ENCODE measurements at regions of chr19 and their contacts with region 1.

Region 1: GRCh38 chr19:9796113-9796773 is 22.6 kb downstream of the FBXL12 start:
- DNase-seq: peak; percentile 75 to 95
- ATAC-seq: peak; percentile 41 to 70 (median 48)
- H3K4me3 ChIP-seq: no peak overlapping the region
- H3K4me3 Mint-ChIP-seq: no peak overlapping the region
- H3K27ac ChIP-seq: peak overlapping the region; percentile 77
- H3K27ac Mint-ChIP-seq: peak overlapping the region; percentile 39 to 70
- H3K4me1 ChIP-seq: peaks cover 10% of the 10 kb centered on the region
- H3K4me1 Mint-ChIP-seq: peaks cover 19 to 26% of the 10 kb centered on the region in 2 donors
- H3K27me3 ChIP-seq: no peaks in the 10 kb centered on the region
- H3K27me3 Mint-ChIP-seq: no peaks in the 10 kb centered on the region
- CTCF ChIP-seq: peak; percentile 90

Region 2: DNA sequence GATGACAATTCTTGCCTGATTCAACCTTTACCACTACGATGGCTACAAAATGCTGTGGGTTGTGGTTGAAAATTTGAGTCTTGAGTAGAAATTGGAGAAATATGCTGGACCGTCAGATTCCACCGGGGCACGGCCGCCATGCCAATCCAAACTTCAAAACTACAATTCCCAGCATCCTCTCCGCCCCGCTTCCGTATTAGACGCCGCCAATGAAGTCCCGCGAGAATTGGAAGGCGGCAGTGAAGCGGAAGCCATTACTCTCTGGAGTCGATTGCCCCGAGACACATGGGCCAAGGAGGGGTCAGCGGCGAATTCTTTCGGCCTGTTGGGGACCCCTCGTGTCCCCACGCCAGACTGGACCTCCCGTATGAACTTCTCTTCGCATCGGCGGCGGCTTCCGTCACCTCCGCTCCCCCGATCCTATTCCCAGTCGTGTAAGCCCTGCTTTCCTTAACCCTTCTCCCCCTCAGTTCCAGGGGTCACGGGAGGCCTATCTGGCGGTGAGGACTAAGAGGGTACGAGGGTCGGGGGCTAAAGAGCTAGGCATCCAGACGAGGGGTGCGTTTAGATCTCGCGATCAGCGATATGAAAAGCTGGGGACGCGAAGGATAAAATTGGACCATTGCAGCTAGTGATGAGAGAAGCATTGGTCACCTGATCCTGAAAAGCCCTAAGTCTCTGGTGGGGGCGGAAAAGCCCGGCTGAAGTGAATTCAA is 655.9 kb before region 1 on chr19 and contains the start of gene ZNF317:
- intact Hi-C with region 1: loop called (anchors 1 kb)
- DNase-seq: peak; percentile 85 to 96
- ATAC-seq: peak; percentile 95 to 96 (median 96)
- H3K4me3 ChIP-seq: peak within 1 kb of the TSS; percentile 97
- H3K4me3 Mint-ChIP-seq: peak within 1 kb of the TSS; percentile 98
- H3K27ac ChIP-seq: peak within 1 kb of the TSS; percentile 91
- H3K27ac Mint-ChIP-seq: peak within 1 kb of the TSS; percentile 95 to 99
- H3K4me1 ChIP-seq: peaks cover 13% of the 10 kb centered on the region
- H3K4me1 Mint-ChIP-seq: peaks cover 35 to 46% of the 10 kb centered on the region in 2 donors
- H3K27me3 ChIP-seq: no peaks in the 10 kb centered on the region
- H3K27me3 Mint-ChIP-seq: peaks cover 0 to 2% of the 10 kb centered on the region in 2 donors
- CTCF ChIP-seq: no peak
- total RNA-seq, gene ZNF317: 78.0 to 91.2 (median 82.8) TPM

Region 3: GRCh38 chr19:9205501-9206113 is 590.6 kb before region 1 on chr19:
- intact Hi-C with region 1: loop called (anchors 1 kb)
- DNase-seq: peak; percentile 55 to 75
- ATAC-seq: peak; percentile 64 to 81 (median 80)
- H3K4me3 ChIP-seq: no peak overlapping the region
- H3K4me3 Mint-ChIP-seq: no peak overlapping the region
- H3K27ac ChIP-seq: no peak overlapping the region
- H3K27ac Mint-ChIP-seq: peak overlapping the region in 1 of 2 donors; percentile 58
- H3K4me1 ChIP-seq: peaks cover 5% of the 10 kb centered on the region
- H3K4me1 Mint-ChIP-seq: peaks cover 6 to 7% of the 10 kb centered on the region in 2 donors
- H3K27me3 ChIP-seq: no peaks in the 10 kb centered on the region
- H3K27me3 Mint-ChIP-seq: peaks cover 15 to 19% of the 10 kb centered on the region in 2 donors
- CTCF ChIP-seq: peak; percentile 89

Region 4: DNA sequence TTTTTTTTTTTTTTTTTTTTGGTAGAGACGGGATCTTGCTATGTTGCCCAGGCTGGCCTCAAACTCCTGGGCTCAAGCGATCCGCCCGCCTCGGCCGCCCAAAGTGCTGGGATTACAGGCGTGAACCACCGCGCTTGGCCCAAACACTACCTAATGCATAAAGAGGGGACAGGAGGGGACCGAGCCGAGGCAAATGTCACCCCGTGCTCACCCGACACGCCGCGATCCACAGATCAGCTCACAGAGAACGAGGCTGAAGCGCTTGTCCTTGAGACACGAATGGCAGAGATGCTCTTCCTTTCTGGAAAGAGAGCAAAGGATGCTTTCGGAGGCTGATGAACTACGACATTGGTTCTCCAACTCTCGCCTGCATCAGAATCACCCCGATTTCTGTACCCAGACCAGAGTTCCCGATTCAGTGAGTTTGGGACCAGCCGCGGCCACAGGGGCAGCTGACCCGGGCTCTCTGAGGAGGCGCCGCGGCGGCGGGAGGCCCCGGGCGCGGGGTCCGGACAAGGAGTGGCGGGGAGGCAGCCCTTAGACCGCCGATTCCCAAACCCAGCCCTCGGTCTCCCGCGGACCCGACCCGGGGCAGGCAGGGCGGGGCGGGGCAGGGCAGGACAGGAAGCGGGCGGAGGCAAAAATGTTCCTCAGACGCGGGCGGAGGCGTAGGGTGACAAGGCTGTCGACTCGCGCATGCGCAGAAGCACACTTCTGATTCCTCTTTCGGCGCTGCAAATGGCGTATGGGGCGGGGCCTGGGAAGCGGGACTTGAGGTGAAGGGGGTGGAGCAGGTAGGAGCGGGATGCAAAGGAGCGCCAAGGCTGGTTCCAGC is 486.9 kb before region 1 on chr19 and contains the start of gene ZNF699:
- intact Hi-C with region 1: loop called (anchors 1 kb)
- DNase-seq: peak; percentile 96 to 100
- ATAC-seq: peak; percentile 89 to 95 (median 90)
- H3K4me3 ChIP-seq: peak within 1 kb of the TSS; percentile 94
- H3K4me3 Mint-ChIP-seq: peak within 1 kb of the TSS; percentile 89
- H3K27ac ChIP-seq: peak within 1 kb of the TSS; percentile 90
- H3K27ac Mint-ChIP-seq: peak within 1 kb of the TSS; percentile 96 to 99
- H3K4me1 ChIP-seq: peaks cover 17% of the 10 kb centered on the region
- H3K4me1 Mint-ChIP-seq: peaks cover 30 to 46% of the 10 kb centered on the region in 2 donors
- H3K27me3 ChIP-seq: no peaks in the 10 kb centered on the region
- H3K27me3 Mint-ChIP-seq: no peaks in the 10 kb centered on the region
- CTCF ChIP-seq: no peak
- total RNA-seq, gene ZNF699: 13.4 to 15.3 (median 15.2) TPM

Region 5: GRCh38 chr19:9435279-9436268 is 360.7 kb before region 1 on chr19 and contains the start of gene ZNF266:
- intact Hi-C with region 1: loop called (anchors 10 kb)
- DNase-seq: peak; percentile 91 to 98
- ATAC-seq: peak; percentile 81 to 91 (median 84)
- H3K4me3 ChIP-seq: peak within 1 kb of the TSS; percentile 73
- H3K4me3 Mint-ChIP-seq: peak within 1 kb of the TSS; percentile 98
- H3K27ac ChIP-seq: peak within 1 kb of the TSS; percentile 91
- H3K27ac Mint-ChIP-seq: peak within 1 kb of the TSS; percentile 97
- H3K4me1 ChIP-seq: peaks cover 14% of the 10 kb centered on the region
- H3K4me1 Mint-ChIP-seq: peaks cover 53 to 59% of the 10 kb centered on the region in 2 donors
- H3K27me3 ChIP-seq: no peaks in the 10 kb centered on the region
- H3K27me3 Mint-ChIP-seq: no peaks in the 10 kb centered on the region
- CTCF ChIP-seq: peak; percentile 75
- total RNA-seq, gene ZNF266: 89.9 to 108 (median 104) TPM

Region 6: DNA sequence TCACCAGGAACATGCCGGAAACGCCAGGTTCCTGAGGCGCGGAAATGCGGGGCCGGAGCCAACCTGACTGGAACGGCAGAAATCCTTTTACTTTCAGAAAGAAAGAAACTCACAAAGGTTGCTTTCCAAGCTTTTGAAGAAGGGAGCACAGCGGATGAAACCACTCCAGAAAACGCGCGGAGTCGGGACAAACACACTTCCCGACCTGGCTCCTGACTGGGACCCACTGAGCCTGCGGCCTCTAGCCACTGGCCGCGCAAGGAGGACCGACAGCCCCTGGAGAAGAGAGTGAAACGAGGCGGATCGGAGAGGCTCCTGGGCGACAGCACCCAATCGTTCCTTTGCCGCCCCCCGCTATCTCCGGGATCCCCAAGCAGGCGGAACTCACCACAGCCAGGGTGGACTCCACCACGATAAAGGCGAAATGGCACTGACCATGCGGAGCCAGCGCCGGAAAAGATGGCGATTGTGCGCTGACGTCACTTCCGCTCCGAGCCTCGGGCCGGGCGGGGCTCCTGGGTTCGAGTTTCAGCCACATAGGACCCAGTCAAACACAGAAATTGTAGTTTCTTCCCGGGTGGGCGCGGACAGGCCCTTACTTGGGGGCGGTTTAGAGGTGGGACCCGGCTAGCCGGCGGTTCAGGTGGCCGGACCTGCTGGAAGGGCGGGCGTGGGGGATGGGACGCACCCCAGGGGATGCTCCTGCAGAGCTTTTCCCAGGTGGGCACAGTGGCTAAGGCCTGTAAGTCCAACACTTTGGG is 212.0 kb before region 1 on chr19 and contains the start of gene ZNF121:
- intact Hi-C with region 1: loop called (anchors 1 kb)
- DNase-seq: peak; percentile 83 to 89
- ATAC-seq: peak; percentile 88 to 89 (median 89)
- H3K4me3 ChIP-seq: peak within 1 kb of the TSS; percentile 95
- H3K4me3 Mint-ChIP-seq: peak within 1 kb of the TSS; percentile 96
- H3K27ac ChIP-seq: peak within 1 kb of the TSS; percentile 94
- H3K27ac Mint-ChIP-seq: peak within 1 kb of the TSS; percentile 97
- H3K4me1 ChIP-seq: peaks cover 27% of the 10 kb centered on the region
- H3K4me1 Mint-ChIP-seq: peaks cover 41 to 44% of the 10 kb centered on the region in 2 donors
- H3K27me3 ChIP-seq: no peaks in the 10 kb centered on the region
- H3K27me3 Mint-ChIP-seq: peaks cover 9 to 19% of the 10 kb centered on the region in 2 donors
- CTCF ChIP-seq: no peak
- total RNA-seq, gene ZNF121: 32.9 to 35.7 (median 33.1) TPM

Region 7: DNA sequence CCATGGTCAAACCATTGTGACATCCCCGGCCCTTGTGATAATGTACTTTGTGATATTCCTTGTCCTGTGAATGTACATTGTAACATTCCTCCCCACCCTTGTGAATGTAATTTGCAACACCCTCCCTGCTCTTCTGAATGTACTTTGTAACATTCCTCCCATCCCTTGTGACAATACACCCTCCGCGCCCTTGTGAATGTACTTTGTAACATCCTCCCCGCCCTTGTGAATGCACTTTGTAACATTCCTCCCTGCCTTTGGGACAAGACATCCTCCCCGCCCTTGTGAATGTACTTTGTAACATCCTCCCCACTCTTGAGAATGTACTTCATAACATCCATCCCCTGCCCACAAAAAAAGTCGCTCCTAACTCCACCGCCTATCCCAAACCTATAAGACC is 44.8 kb before region 1 on chr19:
- intact Hi-C with region 1: no loop called
- DNase-seq: no peak
- ATAC-seq: no peak
- H3K4me3 ChIP-seq: no peak overlapping the region
- H3K4me3 Mint-ChIP-seq: no peak overlapping the region
- H3K27ac ChIP-seq: no peak overlapping the region
- H3K27ac Mint-ChIP-seq: no peak overlapping the region
- H3K4me1 ChIP-seq: no peaks in the 10 kb centered on the region
- H3K4me1 Mint-ChIP-seq: no peaks in the 10 kb centered on the region
- H3K27me3 ChIP-seq: no peaks in the 10 kb centered on the region
- H3K27me3 Mint-ChIP-seq: no peaks in the 10 kb centered on the region
- CTCF ChIP-seq: no peak

Region 8: GRCh38 chr19:9818734-9819589 is 22.7 kb after region 1 on chr19 and contains the start of gene FBXL12:
- intact Hi-C with region 1: loop called (anchors 1 kb)
- DNase-seq: peak; percentile 100
- ATAC-seq: peak; percentile 86 to 96 (median 87)
- H3K4me3 ChIP-seq: peak within 1 kb of the TSS; percentile 87
- H3K4me3 Mint-ChIP-seq: peak within 1 kb of the TSS; percentile 90
- H3K27ac ChIP-seq: peak within 1 kb of the TSS; percentile 95
- H3K27ac Mint-ChIP-seq: peak within 1 kb of the TSS; percentile 87 to 89
- H3K4me1 ChIP-seq: peaks cover 14% of the 10 kb centered on the region
- H3K4me1 Mint-ChIP-seq: peaks cover 19 to 33% of the 10 kb centered on the region in 2 donors
- H3K27me3 ChIP-seq: no peaks in the 10 kb centered on the region
- H3K27me3 Mint-ChIP-seq: no peaks in the 10 kb centered on the region
- CTCF ChIP-seq: no peak
- total RNA-seq, gene FBXL12: 36.9 to 46.8 (median 43.6) TPM

Region 9: GRCh38 chr19:9885077-9885552 is 88.9 kb after region 1 on chr19:
- intact Hi-C with region 1: no loop called
- DNase-seq: no peak
- ATAC-seq: no peak
- H3K4me3 ChIP-seq: no peak overlapping the region
- H3K4me3 Mint-ChIP-seq: no peak overlapping the region
- H3K27ac ChIP-seq: no peak overlapping the region
- H3K27ac Mint-ChIP-seq: no peak overlapping the region
- H3K4me1 ChIP-seq: no peaks in the 10 kb centered on the region
- H3K4me1 Mint-ChIP-seq: no peaks in the 10 kb centered on the region
- H3K27me3 ChIP-seq: no peaks in the 10 kb centered on the region
- H3K27me3 Mint-ChIP-seq: peaks cover 12 to 16% of the 10 kb centered on the region in 2 donors
- CTCF ChIP-seq: no peak

Region 10: GRCh38 chr19:9945319-9945966 is 149.2 kb after region 1 on chr19:
- intact Hi-C with region 1: no loop called
- DNase-seq: no peak
- ATAC-seq: no peak
- H3K4me3 ChIP-seq: no peak overlapping the region
- H3K4me3 Mint-ChIP-seq: no peak overlapping the region
- H3K27ac ChIP-seq: no peak overlapping the region
- H3K27ac Mint-ChIP-seq: no peak overlapping the region
- H3K4me1 ChIP-seq: no peaks in the 10 kb centered on the region
- H3K4me1 Mint-ChIP-seq: no peaks in the 10 kb centered on the region
- H3K27me3 ChIP-seq: peaks cover 6% of the 10 kb centered on the region
- H3K27me3 Mint-ChIP-seq: peaks cover 6 to 15% of the 10 kb centered on the region in 2 donors
- CTCF ChIP-seq: no peak

Region 11: DNA sequence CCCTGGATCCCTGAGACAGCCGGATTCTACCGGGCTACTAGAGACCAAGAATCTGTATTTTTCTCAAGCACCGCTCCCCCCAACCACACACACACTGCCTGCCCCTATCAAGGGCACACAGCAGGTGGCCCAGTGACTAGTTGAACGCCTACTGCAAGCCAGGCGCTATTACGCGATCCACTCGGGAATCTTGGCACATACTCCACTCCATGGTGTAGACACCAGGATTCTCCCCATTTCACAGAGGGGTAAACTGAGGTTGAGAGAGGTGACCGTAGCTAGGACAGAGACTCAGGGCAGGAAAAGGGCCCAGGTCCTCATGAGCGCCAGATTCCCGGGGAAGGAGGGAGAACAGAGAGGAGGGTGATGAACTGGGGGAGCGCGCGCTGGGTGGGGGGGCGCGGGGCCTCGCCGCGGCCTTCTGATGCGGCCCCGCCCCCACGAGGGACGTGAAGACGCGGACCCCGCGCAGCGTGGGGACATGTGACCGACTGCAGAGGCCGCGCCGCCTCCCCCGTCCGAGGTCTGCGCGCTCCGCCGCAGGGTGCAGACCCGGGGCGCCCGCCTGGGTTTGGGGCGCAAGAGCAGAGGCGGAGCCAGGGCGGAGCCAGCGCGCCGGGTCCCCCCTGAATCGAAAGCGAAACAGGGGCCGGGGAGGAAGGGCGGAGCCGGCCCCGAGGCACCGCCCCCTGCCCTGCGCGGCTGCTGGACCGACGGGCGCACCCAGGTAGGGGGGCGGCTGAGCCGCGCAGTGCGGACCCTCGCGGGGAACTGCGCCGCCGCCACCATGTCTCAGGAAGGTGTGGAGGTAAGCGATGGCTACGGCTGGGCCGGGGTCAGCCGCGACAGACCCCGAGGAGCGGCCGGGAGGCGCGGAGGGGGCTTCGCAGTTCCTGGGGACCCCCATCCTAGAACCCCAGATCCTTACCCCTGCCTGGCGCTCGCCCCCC is 289.7 kb after region 1 on chr19 and contains the start of gene SHFL:
- intact Hi-C with region 1: no loop called
- DNase-seq: peak; percentile 87 to 93
- ATAC-seq: peak; percentile 97 to 98 (median 97)
- H3K4me3 ChIP-seq: peak within 1 kb of the TSS; percentile 100
- H3K4me3 Mint-ChIP-seq: peak within 1 kb of the TSS; percentile 89
- H3K27ac ChIP-seq: peak within 1 kb of the TSS; percentile 87
- H3K27ac Mint-ChIP-seq: peak within 1 kb of the TSS; percentile 82 to 87
- H3K4me1 ChIP-seq: peaks cover 20% of the 10 kb centered on the region
- H3K4me1 Mint-ChIP-seq: peaks cover 13 to 19% of the 10 kb centered on the region in 2 donors
- H3K27me3 ChIP-seq: no peaks in the 10 kb centered on the region
- H3K27me3 Mint-ChIP-seq: no peaks in the 10 kb centered on the region
- CTCF ChIP-seq: no peak
- total RNA-seq, gene SHFL: 107 to 111 (median 107) TPM